HCT116 (cell line): ENCODE measurements at regions of chr19 and their contacts with region 1.

Region 1: GRCh38 chr19:43668406-43669158 is 1.4 kb downstream of the PLAUR start:
- DNase-seq: peak; percentile 98
- ATAC-seq: peak; percentile 87
- H3K4me3 ChIP-seq: peak overlapping the region; percentile 79 to 94
- H3K27ac ChIP-seq: peak overlapping the region; percentile 89
- H3K4me1 ChIP-seq: peaks cover 21 to 40% of the 10 kb centered on the region in 2 experiments
- H3K27me3 ChIP-seq: no peaks in the 10 kb centered on the region
- CTCF ChIP-seq: no peak
- POLR2A ChIP-seq: peak; percentile 57
- RAD21 ChIP-seq: no peak

Region 2: DNA sequence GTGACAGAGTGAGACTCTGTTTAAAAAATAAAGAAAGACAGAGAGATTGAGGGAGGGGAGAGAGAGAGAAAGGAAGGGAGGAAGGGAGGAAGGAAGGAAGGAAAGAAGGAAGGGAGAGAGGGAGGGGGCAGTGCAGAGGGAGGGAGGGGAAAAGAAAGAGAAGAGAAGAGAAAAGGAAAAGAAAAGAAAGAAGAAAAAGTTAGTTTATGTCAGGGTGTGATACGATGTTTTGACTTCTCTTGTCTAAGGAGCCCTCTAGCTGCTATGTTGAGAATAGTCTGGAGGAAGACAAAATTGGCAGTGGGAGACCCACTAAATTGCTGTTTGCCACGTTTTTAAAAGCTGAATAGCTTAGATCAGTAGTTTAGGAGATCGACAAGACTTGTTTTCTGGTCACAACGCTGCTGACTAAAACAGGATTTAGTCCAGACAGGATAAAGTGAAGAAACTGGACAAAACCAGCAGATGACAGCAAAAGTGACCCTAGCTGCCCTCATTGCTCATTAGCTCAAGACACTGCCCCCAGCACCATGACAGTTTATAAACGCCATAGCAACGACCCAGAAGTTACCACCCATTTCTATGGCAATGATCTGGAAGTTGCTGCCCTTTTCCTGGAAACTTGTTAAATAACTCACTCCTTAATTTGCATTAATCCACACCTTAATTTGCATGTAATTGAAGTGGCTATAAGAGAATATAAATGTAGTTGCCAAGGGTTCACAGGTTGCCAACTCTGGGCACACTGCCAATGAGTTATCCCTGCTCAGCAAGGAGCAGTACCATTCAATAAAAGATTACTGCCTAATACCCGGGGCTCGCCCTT is 242.8 kb before region 1 on chr19:
- CTCF ChIA-PET with region 1: no interaction called
- POLR2A ChIA-PET with region 1: no interaction called
- RAD21 ChIA-PET with region 1: no interaction called
- intact Hi-C with region 1: no loop called
- DNase-seq: peak; percentile 18
- ATAC-seq: peak; percentile 86
- H3K4me3 ChIP-seq: 0 out of 4 replicates have a peak overlapping the region, but pooled peaks of 1 of the 2 experiments have one; percentile 9
- H3K27ac ChIP-seq: no peak overlapping the region
- H3K4me1 ChIP-seq: peaks cover 7 to 17% of the 10 kb centered on the region in 2 experiments
- H3K27me3 ChIP-seq: no peaks in the 10 kb centered on the region
- CTCF ChIP-seq: peak; percentile 30 to 69 (median 57); a peak in 5 of 6 replicates
- POLR2A ChIP-seq: no peak
- RAD21 ChIP-seq: peak; percentile 57; the same call in 1 of the 2 replicates

Region 3: GRCh38 chr19:43687660-43687997 is 19.0 kb after region 1 on chr19:
- CTCF ChIA-PET with region 1: interaction called, 4 read pairs
- POLR2A ChIA-PET with region 1: interaction called, 10 read pairs
- RAD21 ChIA-PET with region 1: no interaction called
- intact Hi-C with region 1: no loop called
- DNase-seq: no peak
- ATAC-seq: peak; percentile 9
- H3K4me3 ChIP-seq: no peak overlapping the region
- H3K27ac ChIP-seq: no peak overlapping the region
- H3K4me1 ChIP-seq: peaks cover 16 to 19% of the 10 kb centered on the region in 2 experiments
- H3K27me3 ChIP-seq: no peaks in the 10 kb centered on the region
- CTCF ChIP-seq: no peak
- POLR2A ChIP-seq: no peak
- RAD21 ChIP-seq: no peak

Region 4: GRCh38 chr19:43708716-43709115 is 40.1 kb after region 1 on chr19:
- CTCF ChIA-PET with region 1: interaction called, 12 read pairs
- POLR2A ChIA-PET with region 1: interaction called, 22 read pairs
- RAD21 ChIA-PET with region 1: interaction called, 3 to 7 read pairs
- intact Hi-C with region 1: loop called (anchors 5 kb)
- DNase-seq: no peak
- ATAC-seq: peak; percentile 73
- H3K4me3 ChIP-seq: no peak overlapping the region
- H3K27ac ChIP-seq: no peak overlapping the region
- H3K4me1 ChIP-seq: peaks cover 17 to 44% of the 10 kb centered on the region in 2 experiments
- H3K27me3 ChIP-seq: no peaks in the 10 kb centered on the region
- CTCF ChIP-seq: peak in 2 of 3 experiments; percentile 30 to 38; a peak in 4 of 6 replicates
- POLR2A ChIP-seq: no peak
- RAD21 ChIP-seq: peak; percentile 58

Region 5: GRCh38 chr19:43754503-43755255 is 86.1 kb after region 1 on chr19 and contains the start of gene SMG9:
- CTCF ChIA-PET with region 1: interaction called, 5 read pairs
- POLR2A ChIA-PET with region 1: interaction called, 10 read pairs
- RAD21 ChIA-PET with region 1: interaction called in 1 of 2 experiments, 4 read pairs
- intact Hi-C with region 1: loop called (anchors 1 kb)
- DNase-seq: peak; percentile 95
- ATAC-seq: peak; percentile 76
- H3K4me3 ChIP-seq: peak within 1 kb of the TSS; percentile 79 to 86
- H3K27ac ChIP-seq: peak within 1 kb of the TSS; percentile 98
- H3K4me1 ChIP-seq: peaks cover 47 to 81% of the 10 kb centered on the region in 2 experiments
- H3K27me3 ChIP-seq: no peaks in the 10 kb centered on the region
- CTCF ChIP-seq: no peak
- POLR2A ChIP-seq: no peak
- RAD21 ChIP-seq: no peak
- total RNA-seq, gene SMG9: 80.2 TPM